Posterior cingulate gyrus (tissue), 11 donors: ENCODE measurements at regions of chr1 and their contacts with region 1.

Region 1: DNA sequence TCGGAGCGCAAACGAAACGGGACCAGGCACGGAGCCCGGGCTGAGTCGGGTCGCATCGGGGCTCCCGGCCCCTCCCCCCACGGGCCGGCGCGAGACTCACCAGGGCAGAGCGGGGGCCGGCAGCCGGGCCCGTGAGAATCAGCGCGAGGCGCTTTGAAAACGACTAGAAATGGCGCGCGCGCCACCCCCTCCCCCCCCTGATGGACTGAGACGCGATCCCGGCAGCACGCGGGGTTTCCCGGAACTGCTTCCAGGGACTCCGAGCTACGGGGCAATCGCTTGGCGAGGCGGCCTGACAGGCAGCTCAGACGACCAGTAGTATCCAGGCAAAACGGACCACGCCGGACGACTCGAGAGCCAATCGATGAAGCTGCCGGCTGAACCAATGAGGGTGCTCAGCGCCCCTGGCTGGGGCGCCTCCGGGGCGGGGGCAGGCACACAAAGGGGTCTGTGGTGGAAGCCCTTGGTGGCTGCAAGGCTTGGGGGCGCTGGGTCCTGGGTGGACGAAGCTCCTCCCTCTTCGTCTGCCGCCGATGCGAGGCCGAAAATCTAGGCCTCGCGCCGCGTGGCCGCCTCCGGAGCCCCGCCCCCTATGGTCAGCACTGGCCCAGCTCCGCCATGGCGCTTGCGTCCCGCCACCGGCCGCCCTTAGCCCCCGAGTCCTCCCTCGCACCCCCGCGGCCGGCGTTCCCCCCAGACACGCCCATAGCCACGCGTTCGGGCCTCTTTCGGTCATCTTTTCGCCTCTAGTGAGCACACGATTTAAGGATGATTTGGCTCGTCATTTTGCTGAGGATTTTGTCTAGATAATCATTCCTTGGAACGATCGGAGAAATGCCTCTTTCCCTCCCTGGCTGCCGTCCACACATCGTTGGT is at the start of gene HNRNPR:
- DNase-seq: peak; percentile 99 to 100 (median 100)

Region 2: GRCh38 chr1:23368562-23369334 is 24.4 kb after region 1 on chr1:
- intact Hi-C with region 1: loop called (anchors 1 kb)
- DNase-seq: peak; percentile 78 to 98 (median 86)

Region 3: DNA sequence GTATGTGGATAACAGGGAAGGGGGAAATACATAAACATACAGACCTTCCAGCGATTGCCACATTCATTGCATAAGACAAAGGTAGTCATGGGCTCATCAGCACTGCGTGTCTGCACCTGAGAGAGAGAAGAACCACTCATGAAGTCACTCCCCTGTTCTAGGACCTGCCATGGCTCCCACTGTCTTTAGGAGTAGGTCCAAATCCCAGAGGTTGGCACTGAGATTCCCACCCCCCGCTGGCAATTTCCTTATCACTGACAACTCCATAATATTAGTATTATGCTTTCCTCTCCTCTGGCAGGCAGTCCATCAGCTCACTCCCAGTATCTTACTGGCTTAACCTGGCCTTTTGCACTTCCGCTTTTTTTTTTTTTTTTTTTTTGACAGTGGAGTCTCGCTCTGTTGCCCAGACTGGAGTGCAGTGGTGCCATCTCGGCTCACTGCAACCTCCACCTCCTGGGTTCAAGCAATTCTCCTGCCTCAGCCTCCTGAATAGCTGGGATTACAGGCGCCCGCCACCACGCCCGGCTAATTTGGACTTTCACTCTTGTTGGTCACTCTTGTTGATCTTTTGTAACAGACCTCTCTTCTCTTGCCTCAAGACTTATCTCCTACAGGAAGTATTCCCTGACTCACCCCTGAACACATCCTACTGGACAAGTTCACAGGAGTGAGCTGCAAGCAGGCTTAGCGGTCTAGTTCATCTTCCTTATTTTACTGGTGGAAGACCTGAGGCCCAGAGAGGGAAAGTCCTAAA is 40.1 kb after region 1 on chr1:
- intact Hi-C with region 1: no loop called
- DNase-seq: no peak

Region 4: DNA sequence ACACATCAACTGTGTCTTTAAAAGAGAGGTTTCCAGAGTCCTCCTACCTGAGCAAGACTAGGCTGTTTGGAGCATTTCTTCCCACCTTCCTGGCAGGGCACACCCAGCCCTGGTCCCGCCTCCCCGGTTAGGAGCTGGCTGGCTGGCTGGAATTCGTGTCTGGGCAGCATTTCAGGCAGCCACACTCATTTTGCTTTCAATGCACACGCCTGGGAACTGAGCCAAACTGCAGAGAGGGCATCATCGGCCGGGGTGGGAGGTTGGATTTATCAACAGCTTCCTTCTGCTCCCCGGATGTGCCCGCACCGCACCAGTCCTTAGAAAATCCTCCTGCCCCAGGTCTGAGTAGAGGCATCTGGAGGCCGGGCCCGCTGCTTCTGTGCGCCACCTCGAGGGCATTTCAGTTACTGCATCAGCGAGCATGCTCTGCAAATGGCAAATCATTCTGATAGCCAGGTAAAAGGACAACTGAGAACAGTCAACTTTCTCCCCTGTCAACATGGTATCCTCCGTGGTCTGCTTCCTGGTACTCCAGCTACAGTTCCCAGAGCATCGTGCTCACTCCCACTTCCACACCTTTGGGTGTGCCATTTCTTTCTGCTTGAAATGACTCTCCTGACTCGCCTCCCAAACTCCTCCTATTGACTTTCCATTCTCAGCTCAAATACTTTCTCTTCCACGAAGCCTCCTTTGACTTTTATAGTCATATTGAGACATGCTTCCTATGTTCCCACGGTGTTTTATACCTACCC is 59.6 kb after region 1 on chr1:
- intact Hi-C with region 1: loop called (anchors 2 kb)
- DNase-seq: peak; percentile 76 to 98 (median 92)

Region 5: DNA sequence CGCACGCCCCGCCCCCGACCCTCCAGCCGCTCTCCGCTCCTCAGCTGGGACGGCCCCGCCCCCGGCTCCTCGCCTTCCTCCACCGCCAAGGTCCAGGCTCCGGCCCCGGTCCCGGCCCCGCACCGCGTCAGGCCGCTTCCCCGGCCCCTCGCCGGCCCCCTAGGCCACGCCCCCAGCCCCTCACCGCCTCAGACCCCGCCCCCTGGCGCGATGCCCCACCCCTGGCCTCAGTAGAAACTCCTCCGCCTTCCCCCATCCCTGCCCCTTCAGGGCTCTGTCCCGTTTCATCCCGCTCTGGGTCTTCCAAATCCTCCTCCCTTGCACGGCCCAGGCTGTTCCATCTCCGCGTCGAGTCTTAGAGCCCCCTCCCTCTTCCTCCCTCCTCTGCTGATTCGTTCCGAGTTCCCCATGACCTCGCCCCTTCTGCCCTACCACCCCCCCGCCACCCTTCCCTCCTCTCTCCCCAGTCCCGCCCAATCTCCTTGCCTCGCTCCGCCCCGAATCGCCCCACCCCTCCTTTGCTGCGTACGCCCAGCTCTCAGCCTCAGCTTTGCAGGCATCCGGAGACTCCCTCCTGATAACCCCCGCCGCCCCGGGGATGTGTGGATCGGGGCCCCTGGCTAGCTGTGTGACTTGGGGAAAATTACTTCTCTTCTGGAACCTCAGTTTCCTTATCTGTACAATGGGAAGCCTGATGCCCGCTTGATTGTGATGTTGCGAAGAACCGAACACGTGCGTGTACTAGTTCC is 140.1 kb after region 1 on chr1:
- intact Hi-C with region 1: loop called (anchors 10 kb)
- DNase-seq: peak; percentile 60 to 95 (median 74)

Region 6: DNA sequence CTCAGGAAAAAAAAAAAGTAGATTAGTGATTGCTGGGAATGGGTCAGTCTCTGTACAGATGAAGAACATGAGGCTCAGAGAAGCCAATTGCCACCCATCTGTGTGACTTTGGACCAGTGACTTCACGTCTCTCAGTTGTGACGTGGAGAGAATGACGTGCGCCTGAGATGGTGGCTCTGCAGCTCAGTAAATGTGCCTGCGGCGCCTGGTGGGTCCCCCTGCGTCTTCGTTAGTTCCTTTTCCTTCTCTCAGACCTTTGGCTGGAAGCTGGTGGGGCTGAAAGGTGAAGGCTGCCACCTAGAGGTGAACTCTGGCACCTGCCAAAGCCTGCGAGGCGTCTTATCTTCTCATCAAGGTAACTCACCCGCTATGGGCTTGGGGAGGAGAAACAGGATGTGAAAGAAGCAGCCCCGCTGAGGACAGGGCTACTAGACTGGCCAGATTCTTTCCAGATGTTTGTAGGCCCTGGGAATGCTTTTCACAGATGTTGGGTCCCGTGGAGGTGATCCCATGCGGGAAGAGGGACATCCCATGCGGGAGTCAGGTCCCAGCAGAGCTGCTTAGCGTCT is 195.4 kb after region 1 on chr1:
- intact Hi-C with region 1: loop called (anchors 10 kb)
- DNase-seq: peak; percentile 74 to 97 (median 86)